Activated CD8-positive, alpha-beta T cell treated with anti-CD3 and anti-CD28 coated beads, Interleukin-2, amount 10 ng/mL, durations not matched to agents 7 days and 5 days (primary cell): ENCODE measurements at regions of chr4 and their contacts with region 1.

Region 1: DNA sequence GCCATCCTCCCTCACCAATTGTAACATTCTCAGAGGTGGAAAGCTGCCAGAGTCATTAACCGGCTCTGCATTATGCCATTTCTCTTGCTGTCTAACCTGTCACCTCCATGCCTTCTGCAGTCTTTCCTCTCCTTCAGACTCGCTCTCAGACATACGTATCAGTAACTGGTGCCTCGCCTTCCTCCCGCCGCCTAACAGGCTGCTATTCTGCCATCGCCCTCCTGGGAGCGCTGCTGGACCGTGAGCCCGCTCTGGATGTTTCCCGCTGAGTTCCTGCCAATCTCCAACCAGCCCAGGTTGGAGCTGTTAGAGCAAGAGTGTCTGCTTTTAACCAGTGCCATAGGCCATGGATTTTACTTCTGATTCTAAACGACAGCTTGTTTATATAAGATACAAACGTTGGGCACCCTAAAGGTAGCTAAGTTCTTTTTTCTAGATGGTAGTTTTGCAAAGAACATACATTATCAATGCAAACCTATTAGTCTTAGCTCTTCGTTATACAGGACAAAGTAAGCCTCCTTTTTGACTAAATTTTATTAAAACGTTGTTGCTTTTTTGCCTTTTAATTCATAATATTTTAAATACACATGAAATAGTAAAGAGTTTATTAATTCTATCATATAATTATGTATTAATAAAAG is 59.5 kb upstream of the NEIL3 start:
- DNase-seq: peak; percentile 77
- ATAC-seq: peak; percentile 97
- H3K4me3 Mint-ChIP-seq: no peak overlapping the region
- H3K27ac Mint-ChIP-seq: no peak overlapping the region
- H3K4me1 Mint-ChIP-seq: peaks cover 10% of the 10 kb centered on the region
- H3K27me3 Mint-ChIP-seq: peaks cover 12% of the 10 kb centered on the region

Region 2: DNA sequence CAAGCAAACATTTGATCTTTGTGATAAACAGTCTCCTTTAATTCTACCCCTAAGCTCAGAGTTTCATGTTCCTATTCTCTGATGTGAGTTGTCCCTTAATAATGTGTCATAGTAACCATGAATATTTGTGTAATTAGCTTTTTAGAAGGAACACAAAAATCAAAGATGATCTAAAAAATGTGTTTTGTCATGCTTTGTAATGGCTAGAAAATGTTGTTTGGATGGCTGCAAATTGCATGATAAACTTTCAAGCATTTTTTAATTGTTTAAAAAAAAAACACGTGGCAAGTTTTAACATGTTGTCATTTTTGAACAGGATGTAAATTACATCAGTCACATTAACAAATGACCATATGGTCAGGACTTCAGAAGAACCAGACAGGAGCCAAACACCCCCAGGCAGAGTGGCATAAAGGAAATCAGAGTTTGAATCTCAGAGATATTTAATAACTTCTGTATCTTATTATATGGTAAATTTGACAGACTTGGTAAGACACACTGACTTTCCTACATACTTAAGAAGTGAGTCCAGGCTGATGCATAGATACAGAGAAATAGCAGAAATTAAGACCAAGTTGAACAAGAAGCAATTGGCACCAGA is 233.5 kb before region 1 on chr4:
- CTCF ChIA-PET with region 1: no interaction called
- POLR2A ChIA-PET with region 1: no interaction called
- DNase-seq: no peak
- ATAC-seq: no peak
- H3K4me3 Mint-ChIP-seq: no peak overlapping the region
- H3K27ac Mint-ChIP-seq: no peak overlapping the region
- H3K4me1 Mint-ChIP-seq: no peaks in the 10 kb centered on the region
- H3K27me3 Mint-ChIP-seq: no peaks in the 10 kb centered on the region

Region 3: GRCh38 chr4:177093964-177094363 is 156.2 kb before region 1 on chr4:
- CTCF ChIA-PET with region 1: no interaction called
- POLR2A ChIA-PET with region 1: no interaction called
- DNase-seq: no peak
- ATAC-seq: no peak
- H3K4me3 Mint-ChIP-seq: no peak overlapping the region
- H3K27ac Mint-ChIP-seq: no peak overlapping the region
- H3K4me1 Mint-ChIP-seq: no peaks in the 10 kb centered on the region
- H3K27me3 Mint-ChIP-seq: no peaks in the 10 kb centered on the region

Region 4: DNA sequence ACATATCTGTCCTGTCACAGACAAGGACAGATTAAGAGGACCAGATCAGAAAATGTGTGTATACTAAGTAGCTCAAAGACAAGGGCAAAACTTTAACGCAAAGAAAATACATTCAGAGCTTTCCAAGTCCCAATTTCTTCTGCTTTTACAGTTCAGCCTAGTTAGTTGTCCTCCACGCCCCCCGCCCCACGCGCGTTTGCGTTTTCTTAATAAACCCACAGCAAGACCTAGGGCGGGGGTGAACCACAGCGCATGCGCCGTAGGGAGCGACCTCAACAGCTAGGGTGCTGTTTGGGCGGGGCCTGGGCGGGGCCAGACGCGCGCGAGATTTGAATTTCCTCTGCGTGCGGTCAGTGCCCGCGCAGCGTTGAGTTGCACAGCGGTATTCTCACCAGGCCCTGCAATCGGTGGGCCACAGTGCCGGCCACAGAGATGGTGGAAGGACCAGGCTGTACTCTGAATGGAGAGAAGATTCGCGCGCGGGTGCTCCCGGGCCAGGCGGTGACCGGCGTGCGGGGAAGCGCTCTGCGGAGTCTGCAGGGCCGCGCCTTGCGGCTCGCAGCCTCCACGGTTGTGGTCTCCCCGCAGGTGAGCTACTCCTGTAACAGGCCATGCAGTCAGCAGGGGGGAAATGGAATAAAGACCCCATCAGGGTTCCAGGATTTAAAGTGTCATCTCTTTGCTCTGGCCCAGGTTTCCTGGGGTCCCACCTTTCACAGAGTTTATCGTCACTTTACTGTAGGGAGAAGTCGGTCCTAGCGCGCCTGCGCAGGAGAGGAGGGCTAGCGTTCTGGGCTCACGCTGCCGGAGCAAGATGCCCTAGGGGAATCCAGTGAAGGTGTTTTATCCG is 59.6 kb after region 1 on chr4 and contains the start of gene NEIL3:
- CTCF ChIA-PET with region 1: interaction called, 19 read pairs
- POLR2A ChIA-PET with region 1: interaction called, 6 read pairs
- DNase-seq: peak; percentile 98
- ATAC-seq: peak; percentile 92
- H3K4me3 Mint-ChIP-seq: peak within 1 kb of the TSS; percentile 95
- H3K27ac Mint-ChIP-seq: peak within 1 kb of the TSS; percentile 97
- H3K4me1 Mint-ChIP-seq: peaks cover 48% of the 10 kb centered on the region
- H3K27me3 Mint-ChIP-seq: no peaks in the 10 kb centered on the region
- total RNA-seq, gene NEIL3: 33.7 to 35.2 TPM

Region 5: DNA sequence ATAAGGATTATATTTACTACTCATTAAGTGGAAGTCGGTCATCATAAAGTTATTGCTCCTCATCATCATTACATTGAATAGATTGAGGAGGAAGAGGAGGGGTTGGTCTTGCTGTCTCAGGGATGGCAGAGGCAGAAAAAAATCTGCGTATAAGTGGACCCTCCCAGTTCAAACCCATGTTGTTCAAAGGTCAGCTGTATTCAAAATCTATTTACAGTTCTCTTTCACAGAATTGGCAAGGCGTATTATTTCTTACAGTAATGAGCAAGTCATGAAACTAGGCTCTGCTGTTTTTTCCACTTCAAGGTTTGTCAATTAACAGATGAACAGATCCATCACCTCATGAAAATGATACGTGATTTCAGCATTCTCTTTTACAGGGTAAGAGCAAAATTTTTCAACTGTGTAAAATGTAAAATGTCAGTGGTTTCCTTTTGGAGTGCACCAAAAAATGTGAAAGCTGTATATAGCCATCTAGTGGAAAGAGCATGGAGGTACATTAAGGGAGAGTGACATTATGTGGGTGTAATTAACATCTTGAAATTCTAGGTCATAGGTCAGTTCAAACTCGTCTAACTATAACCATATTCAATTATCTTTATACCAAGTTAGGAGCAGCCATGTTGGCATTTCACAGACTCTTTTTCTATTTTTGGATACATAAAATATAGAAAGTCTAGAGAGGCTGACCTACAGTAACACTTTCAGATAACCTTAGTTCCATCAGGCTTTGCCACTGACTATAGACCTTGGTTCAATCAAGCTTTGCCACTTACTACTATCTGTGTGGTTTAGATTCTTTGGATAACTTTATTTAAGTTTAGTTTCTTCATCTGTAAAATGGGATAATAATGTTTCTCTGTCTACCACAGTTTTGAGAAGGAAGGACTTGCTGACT is 89.5 kb after region 1 on chr4:
- CTCF ChIA-PET with region 1: interaction called, 110 read pairs
- POLR2A ChIA-PET with region 1: no interaction called
- DNase-seq: no peak
- ATAC-seq: peak; percentile 84
- H3K4me3 Mint-ChIP-seq: no peak overlapping the region
- H3K27ac Mint-ChIP-seq: no peak overlapping the region
- H3K4me1 Mint-ChIP-seq: peaks cover 4% of the 10 kb centered on the region
- H3K27me3 Mint-ChIP-seq: no peaks in the 10 kb centered on the region